Esophagus squamous epithelium (tissue), 5 donors: ENCODE measurements at regions of chr17 and their contacts with region 1.

Region 1: DNA sequence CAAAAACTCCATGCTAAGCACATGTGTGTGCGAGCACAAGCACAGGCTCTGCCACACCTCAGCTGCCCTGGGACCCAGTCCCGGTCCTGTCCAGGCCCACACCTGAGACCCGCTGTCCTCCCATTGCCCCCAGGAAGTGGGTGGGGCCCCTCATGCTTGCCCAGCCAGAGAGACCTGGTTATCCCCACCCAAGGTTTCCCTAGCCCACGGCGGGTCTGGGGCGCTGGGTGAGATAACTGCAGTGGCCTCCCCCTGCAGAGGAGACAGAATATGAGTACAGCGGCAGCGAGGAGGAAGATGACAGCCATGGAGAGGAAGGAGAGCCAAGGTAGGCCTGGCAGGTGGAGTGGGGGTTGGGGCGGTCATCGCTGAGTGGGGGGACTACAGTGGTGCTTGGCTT is 12.5 kb upstream of the C17orf107 start:
- DNase-seq: no peak
- H3K4me3 ChIP-seq: no peak overlapping the region
- H3K27ac ChIP-seq: no peak overlapping the region
- H3K4me1 ChIP-seq: peaks cover 0 to 4% (median 0%) of the 10 kb centered on the region in 3 donors
- H3K27me3 ChIP-seq: no peaks in the 10 kb centered on the region
- CTCF ChIP-seq: no peak
- POLR2A ChIP-seq: no peak

Region 2: GRCh38 chr17:4733073-4733531 is 153.8 kb before region 1 on chr17:
- intact Hi-C with region 1: loop called (anchors 5 kb)
- DNase-seq: no peak
- H3K4me3 ChIP-seq: no peak overlapping the region
- H3K27ac ChIP-seq: peak overlapping the region in 2 of 4 donors; percentile 25 to 46
- H3K4me1 ChIP-seq: peaks cover under 1 to 29% (median 12%) of the 10 kb centered on the region in 3 donors
- H3K27me3 ChIP-seq: no peaks in the 10 kb centered on the region
- CTCF ChIP-seq: peak in 2 of 6 experiments; percentile 23 to 24
- POLR2A ChIP-seq: no peak

Region 3: DNA sequence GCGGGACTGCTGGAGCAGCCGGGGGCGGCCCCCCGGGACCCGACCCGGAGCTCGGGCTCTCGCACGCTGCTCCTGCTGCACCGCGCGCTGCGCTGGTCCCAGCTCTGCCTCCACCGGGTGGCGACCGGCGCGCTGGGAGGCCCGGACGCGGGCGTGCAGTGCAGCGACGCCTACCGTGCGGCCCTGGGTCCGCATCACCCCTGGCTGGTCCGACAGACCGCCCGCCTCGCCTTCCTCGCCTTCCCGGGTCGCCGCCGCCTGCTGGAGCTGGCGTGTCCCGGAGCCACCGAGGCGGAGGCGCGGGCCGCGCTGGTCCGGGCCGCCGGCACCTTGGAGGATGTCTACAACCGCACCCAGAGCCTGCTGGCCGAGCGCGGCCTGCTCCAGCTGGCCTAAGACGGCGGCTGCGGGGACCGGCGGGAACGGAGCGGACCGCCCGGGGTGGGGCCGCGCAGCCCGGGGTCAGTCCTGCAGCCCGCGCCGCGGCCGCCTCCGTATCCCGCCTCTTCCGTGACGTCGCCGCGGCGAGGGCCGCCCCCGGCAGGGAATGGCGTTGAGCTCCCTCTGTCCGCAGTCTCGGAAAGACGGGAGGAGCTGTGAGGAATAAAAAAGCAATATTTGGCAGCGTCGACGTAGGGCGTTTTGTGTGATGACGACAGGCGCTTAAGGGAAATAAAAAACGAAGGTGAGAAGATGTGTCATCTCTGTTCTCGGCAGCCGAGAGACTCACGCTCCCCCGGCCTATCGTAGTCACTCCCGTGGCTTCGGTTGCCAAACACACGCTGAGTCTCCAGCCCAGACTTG is 96.7 kb before region 1 on chr17:
- intact Hi-C with region 1: loop called (anchors 5 kb)
- DNase-seq: peak; percentile 24
- H3K4me3 ChIP-seq: peak overlapping the region; percentile 44 to 89 (median 67)
- H3K27ac ChIP-seq: peak overlapping the region; percentile 95 to 99 (median 96)
- H3K4me1 ChIP-seq: peaks cover 21 to 56% (median 32%) of the 10 kb centered on the region in 3 donors
- H3K27me3 ChIP-seq: peaks cover 0 to 14% (median 0%) of the 10 kb centered on the region in 4 donors
- CTCF ChIP-seq: peak; percentile 68 to 94 (median 84)
- POLR2A ChIP-seq: peak in 3 of 4 donors; percentile 52 to 90 (median 89)

Region 4: DNA sequence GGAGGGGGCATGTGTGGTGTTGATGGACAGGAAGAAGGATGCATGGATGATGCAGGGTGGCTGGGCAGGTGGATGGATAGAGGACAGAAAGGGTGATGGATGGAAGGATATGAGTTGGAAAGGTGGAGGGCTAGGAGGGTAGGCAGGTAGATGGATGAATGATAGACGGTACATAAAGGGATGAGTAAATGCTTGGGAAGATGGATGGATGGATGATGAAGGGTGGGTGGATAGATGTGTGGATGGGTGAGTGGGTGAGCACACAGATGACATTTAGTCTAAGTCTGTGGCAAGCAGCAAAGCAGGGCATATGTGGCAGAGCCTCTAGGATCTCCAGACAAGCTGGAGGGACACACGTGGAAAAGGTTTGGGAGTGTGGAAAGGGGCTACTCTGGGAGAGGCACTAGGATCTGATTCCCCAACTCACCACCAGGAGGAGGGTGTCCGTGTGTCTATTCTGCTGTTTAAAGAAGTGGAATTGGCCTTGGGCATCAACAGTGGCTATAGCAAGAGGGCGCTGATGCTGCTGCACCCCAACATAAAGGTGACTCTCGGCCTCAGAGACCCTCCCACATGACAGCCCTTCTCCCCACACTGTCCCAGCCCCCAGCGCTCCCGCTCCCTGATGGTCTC is 71.7 kb before region 1 on chr17:
- intact Hi-C with region 1: no loop called
- DNase-seq: no peak
- H3K4me3 ChIP-seq: no peak overlapping the region
- H3K27ac ChIP-seq: no peak overlapping the region
- H3K4me1 ChIP-seq: peaks cover 0 to 26% (median 0%) of the 10 kb centered on the region in 3 donors
- H3K27me3 ChIP-seq: no peaks in the 10 kb centered on the region
- CTCF ChIP-seq: peak in 2 of 6 experiments; percentile 15 to 39
- POLR2A ChIP-seq: no peak